HCT116 (cell line): ENCODE measurements at regions of chr1 and their contacts with region 1.

Region 1: GRCh38 chr1:27365372-27366112 is 1.2 kb downstream of the MAP3K6 start:
- DNase-seq: peak; percentile 73
- ATAC-seq: peak; percentile 75
- H3K4me3 ChIP-seq: peak overlapping the region; percentile 67 to 69
- H3K27ac ChIP-seq: peak overlapping the region; percentile 100
- H3K4me1 ChIP-seq: peaks cover 12 to 32% of the 10 kb centered on the region in 2 experiments
- H3K27me3 ChIP-seq: no peaks in the 10 kb centered on the region
- CTCF ChIP-seq: no peak
- POLR2A ChIP-seq: peak; percentile 25
- RAD21 ChIP-seq: no peak

Region 2: GRCh38 chr1:27257155-27257554 is 108.4 kb before region 1 on chr1:
- CTCF ChIA-PET with region 1: no interaction called
- POLR2A ChIA-PET with region 1: no interaction called
- RAD21 ChIA-PET with region 1: no interaction called
- intact Hi-C with region 1: no loop called
- DNase-seq: no peak
- ATAC-seq: no peak
- H3K4me3 ChIP-seq: no peak overlapping the region
- H3K27ac ChIP-seq: no peak overlapping the region
- H3K4me1 ChIP-seq: peaks cover 0 to 7% of the 10 kb centered on the region in 2 experiments; a peak in 1 of 4 replicates
- H3K27me3 ChIP-seq: no peaks in the 10 kb centered on the region
- CTCF ChIP-seq: no peak
- POLR2A ChIP-seq: no peak
- RAD21 ChIP-seq: no peak

Region 3: GRCh38 chr1:27332536-27333281 is 32.8 kb before region 1 on chr1:
- CTCF ChIA-PET with region 1: interaction called, 10 read pairs
- POLR2A ChIA-PET with region 1: no interaction called
- RAD21 ChIA-PET with region 1: interaction called, 3 to 6 read pairs
- intact Hi-C with region 1: no loop called
- DNase-seq: no peak
- ATAC-seq: peak; percentile 89
- H3K4me3 ChIP-seq: no peak overlapping the region
- H3K27ac ChIP-seq: no peak overlapping the region; the same call in 1 of the 2 replicates
- H3K4me1 ChIP-seq: no peaks in the 10 kb centered on the region
- H3K27me3 ChIP-seq: no peaks in the 10 kb centered on the region
- CTCF ChIP-seq: peak; percentile 66 to 92 (median 92); a peak in 5 of 6 replicates
- POLR2A ChIP-seq: no peak
- RAD21 ChIP-seq: peak; percentile 68

Region 4: GRCh38 chr1:27349784-27350662 is 15.5 kb before region 1 on chr1:
- CTCF ChIA-PET with region 1: interaction called, 7 read pairs
- POLR2A ChIA-PET with region 1: interaction called, 14 read pairs
- RAD21 ChIA-PET with region 1: no interaction called
- intact Hi-C with region 1: no loop called
- DNase-seq: no peak
- ATAC-seq: no peak
- H3K4me3 ChIP-seq: no peak overlapping the region
- H3K27ac ChIP-seq: peak overlapping the region; percentile 77; the same call in 1 of the 2 replicates
- H3K4me1 ChIP-seq: peaks cover 26 to 39% of the 10 kb centered on the region in 2 experiments
- H3K27me3 ChIP-seq: no peaks in the 10 kb centered on the region
- CTCF ChIP-seq: no peak
- POLR2A ChIP-seq: no peak
- RAD21 ChIP-seq: no peak

Region 5: DNA sequence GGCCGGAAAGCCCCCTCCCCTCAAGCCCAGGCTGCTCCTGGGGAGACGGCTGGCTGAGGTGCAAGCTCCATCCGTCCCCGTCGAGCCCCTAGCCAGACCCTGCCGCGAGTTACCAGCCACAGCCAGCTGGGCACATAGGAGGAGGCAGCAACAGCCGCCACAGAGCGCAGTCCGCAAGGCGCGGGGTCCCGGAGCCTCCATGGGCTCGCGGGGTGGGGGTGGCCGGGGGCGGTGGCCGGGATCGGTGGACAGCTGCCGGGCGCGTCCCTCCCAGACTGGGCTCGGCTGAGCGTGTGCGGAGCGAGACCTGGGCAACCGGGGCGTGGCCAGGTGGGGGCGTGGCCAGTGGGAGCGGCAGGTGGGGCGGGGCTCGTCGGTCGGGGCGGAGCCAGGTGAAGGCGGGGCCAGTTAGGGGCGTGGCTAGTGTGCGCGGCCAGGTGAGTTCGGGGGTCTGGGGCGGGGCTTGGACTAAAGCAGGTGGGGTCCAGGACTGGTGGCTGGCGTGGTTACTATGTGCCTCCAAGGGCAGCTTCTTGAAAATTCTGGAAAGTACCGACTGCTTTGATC is 17.6 kb after region 1 on chr1 and contains the start of gene CD164L2:
- CTCF ChIA-PET with region 1: interaction called, 10 read pairs
- POLR2A ChIA-PET with region 1: interaction called, 26 read pairs
- RAD21 ChIA-PET with region 1: no interaction called
- intact Hi-C with region 1: no loop called
- DNase-seq: no peak
- ATAC-seq: peak; percentile 95
- H3K4me3 ChIP-seq: peak within 1 kb of the TSS; percentile 60 to 67
- H3K27ac ChIP-seq: peak within 1 kb of the TSS; percentile 56; the same call in 1 of the 2 replicates
- H3K4me1 ChIP-seq: peaks cover 11 to 60% of the 10 kb centered on the region in 2 experiments
- H3K27me3 ChIP-seq: no peaks in the 10 kb centered on the region
- CTCF ChIP-seq: no peak
- POLR2A ChIP-seq: no peak
- RAD21 ChIP-seq: no peak
- total RNA-seq, gene CD164L2: 11.6 TPM

Region 6: DNA sequence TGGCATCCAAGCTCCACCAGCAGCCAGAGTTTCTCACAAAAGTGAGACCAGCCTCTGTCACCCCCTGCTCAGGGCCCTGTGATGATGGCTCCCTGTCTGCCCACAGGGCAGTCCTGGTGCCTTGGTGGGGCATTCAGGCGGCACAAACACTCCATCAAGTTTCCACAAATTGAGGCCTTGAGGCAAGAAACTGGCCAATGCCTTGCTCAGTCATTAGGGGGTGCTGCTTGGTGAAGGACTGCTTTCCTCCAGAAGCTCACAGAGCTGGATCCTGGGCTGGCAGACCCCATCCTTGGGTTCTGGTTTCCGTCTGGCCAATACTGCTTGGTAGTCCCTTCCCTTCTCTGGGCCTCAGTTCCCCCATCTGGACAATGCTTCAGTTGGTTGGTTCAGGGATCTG is 250.9 kb after region 1 on chr1:
- CTCF ChIA-PET with region 1: no interaction called
- POLR2A ChIA-PET with region 1: no interaction called
- RAD21 ChIA-PET with region 1: no interaction called
- intact Hi-C with region 1: no loop called
- DNase-seq: no peak
- ATAC-seq: peak; percentile 46; the same call in 1 of the 2 replicates
- H3K4me3 ChIP-seq: no peak overlapping the region
- H3K27ac ChIP-seq: no peak overlapping the region; the same call in 1 of the 2 replicates
- H3K4me1 ChIP-seq: peaks cover 0 to 3% of the 10 kb centered on the region in 2 experiments; a peak in 2 of 4 replicates
- H3K27me3 ChIP-seq: no peaks in the 10 kb centered on the region
- CTCF ChIP-seq: peak in 2 of 3 experiments; percentile 23 to 43; a peak in 4 of 6 replicates
- POLR2A ChIP-seq: no peak
- RAD21 ChIP-seq: no peak

Region 7: DNA sequence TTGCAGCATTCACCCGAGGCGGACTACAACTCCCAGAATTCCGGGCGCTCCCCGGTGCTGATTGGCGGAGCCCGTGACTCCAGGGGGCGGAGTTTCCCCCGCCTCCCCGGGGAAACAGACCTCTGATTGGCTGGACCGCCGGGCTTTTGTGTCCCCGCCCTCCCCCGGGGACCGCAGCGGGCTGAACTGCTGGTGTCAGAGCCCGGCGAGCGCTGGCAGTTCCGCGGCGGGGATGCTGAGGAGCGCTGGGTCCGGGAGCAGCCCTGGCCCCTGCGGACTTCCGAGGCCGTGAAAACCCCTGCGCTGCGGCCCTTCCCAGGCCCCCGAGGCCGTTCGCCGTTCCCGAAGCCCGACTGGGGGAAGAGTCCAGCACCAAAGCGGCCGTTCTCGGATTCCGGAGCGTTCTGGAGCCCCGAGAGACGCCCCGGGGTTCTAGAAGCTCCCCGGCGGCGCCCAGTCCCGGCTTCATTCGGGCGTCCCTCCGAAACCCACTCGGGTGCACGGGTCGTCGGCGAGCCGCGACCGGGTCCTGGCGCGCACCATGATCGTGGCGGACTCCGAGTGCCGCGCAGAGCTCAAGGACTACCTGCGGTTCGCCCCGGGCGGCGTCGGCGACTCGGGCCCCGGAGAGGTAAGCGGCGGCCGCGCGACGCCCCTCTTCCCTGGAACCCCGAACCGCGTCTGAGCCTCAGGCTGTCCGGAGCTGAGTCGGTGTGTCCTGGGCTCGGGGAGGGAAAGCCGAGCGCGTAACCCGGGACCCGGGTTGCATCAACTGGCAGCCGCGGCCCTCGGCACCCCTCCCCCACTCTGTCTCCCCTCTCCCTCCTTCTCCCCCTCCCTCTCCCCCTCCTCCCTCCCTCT is 894.0 kb after region 1 on chr1 and contains the start of gene SESN2:
- CTCF ChIA-PET with region 1: no interaction called
- POLR2A ChIA-PET with region 1: no interaction called
- RAD21 ChIA-PET with region 1: no interaction called
- intact Hi-C with region 1: no loop called
- DNase-seq: peak; percentile 96
- ATAC-seq: peak; percentile 93
- H3K4me3 ChIP-seq: peak within 1 kb of the TSS; percentile 91 to 93
- H3K27ac ChIP-seq: peak within 1 kb of the TSS; percentile 81
- H3K4me1 ChIP-seq: peaks cover 12 to 21% of the 10 kb centered on the region in 2 experiments
- H3K27me3 ChIP-seq: no peaks in the 10 kb centered on the region
- CTCF ChIP-seq: no peak
- POLR2A ChIP-seq: peak; percentile 86
- RAD21 ChIP-seq: no peak
- total RNA-seq, gene SESN2: 36.8 TPM